Activated CD8-positive, alpha-beta memory T cell treated with anti-CD3 and anti-CD28 coated beads, Interleukin-2, amount 10 ng/mL, durations not matched to agents 7 days and 5 days (primary cell): ENCODE measurements at regions of chr14 and their contacts with region 1.

Region 1: GRCh38 chr14:33792720-33793368 is 158.0 kb downstream of the EGLN3 start:
- DNase-seq: peak; percentile 77
- ATAC-seq: peak; percentile 58
- H3K4me3 Mint-ChIP-seq: no peak overlapping the region
- H3K27ac Mint-ChIP-seq: no peak overlapping the region
- H3K4me1 Mint-ChIP-seq: peaks cover 22% of the 10 kb centered on the region
- H3K27me3 Mint-ChIP-seq: peaks cover 26% of the 10 kb centered on the region

Region 2: DNA sequence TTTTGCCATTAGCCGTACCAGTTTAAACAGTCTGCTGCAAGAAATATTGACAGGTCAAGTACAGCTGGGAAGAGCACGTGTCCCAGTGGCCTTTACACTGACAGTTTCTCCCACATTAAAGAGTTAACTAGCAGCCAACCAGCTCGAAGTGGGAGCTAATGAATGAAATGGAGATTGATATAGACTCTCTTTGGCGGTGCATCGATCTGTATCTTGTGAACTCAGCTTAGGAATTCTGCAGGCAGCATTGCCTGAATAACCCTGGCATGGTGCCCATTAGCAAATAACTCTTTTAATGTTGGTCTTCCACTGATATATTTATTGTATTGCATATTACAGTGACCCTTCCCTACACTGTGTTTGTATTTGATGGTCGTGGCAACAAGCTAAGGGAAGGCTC is 161.4 kb before region 1 on chr14:
- CTCF ChIA-PET with region 1: no interaction called
- DNase-seq: no peak
- ATAC-seq: no peak
- H3K4me3 Mint-ChIP-seq: no peak overlapping the region
- H3K27ac Mint-ChIP-seq: no peak overlapping the region
- H3K4me1 Mint-ChIP-seq: no peaks in the 10 kb centered on the region
- H3K27me3 Mint-ChIP-seq: no peaks in the 10 kb centered on the region

Region 3: GRCh38 chr14:33755358-33755757 is 37.5 kb before region 1 on chr14:
- CTCF ChIA-PET with region 1: no interaction called
- DNase-seq: no peak
- ATAC-seq: no peak
- H3K4me3 Mint-ChIP-seq: no peak overlapping the region
- H3K27ac Mint-ChIP-seq: no peak overlapping the region
- H3K4me1 Mint-ChIP-seq: no peaks in the 10 kb centered on the region
- H3K27me3 Mint-ChIP-seq: no peaks in the 10 kb centered on the region

Region 4: DNA sequence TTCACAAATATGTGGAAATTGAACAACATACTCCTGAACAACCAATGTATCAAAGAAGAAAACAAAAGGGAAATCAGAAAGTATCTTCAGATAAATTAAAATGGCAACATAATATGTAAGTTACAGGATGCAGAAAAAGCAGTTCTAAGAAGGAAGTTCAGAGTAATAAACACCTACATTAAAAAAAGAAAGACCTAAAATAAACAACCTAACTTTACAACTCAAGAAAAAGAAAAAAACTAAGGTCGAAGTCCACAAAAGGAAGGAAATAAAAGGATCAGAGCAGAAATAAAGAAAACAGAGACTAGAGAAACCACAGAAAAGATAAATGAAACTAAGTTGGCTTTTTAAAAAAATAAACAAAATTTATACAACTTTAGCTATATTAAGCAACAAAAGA is 98.9 kb after region 1 on chr14:
- CTCF ChIA-PET with region 1: no interaction called
- DNase-seq: no peak
- ATAC-seq: no peak
- H3K4me3 Mint-ChIP-seq: no peak overlapping the region
- H3K27ac Mint-ChIP-seq: no peak overlapping the region
- H3K4me1 Mint-ChIP-seq: no peaks in the 10 kb centered on the region
- H3K27me3 Mint-ChIP-seq: no peaks in the 10 kb centered on the region

Region 5: GRCh38 chr14:34227834-34228649 is 435.2 kb after region 1 on chr14:
- CTCF ChIA-PET with region 1: interaction called, 11 read pairs
- DNase-seq: peak; percentile 65
- ATAC-seq: peak; percentile 90
- H3K4me3 Mint-ChIP-seq: no peak overlapping the region
- H3K27ac Mint-ChIP-seq: peak overlapping the region; percentile 12
- H3K4me1 Mint-ChIP-seq: peaks cover 8% of the 10 kb centered on the region
- H3K27me3 Mint-ChIP-seq: peaks cover 32% of the 10 kb centered on the region